ENCODE measurements at regions of chr1 and their contacts with region 1.

Region 1: DNA sequence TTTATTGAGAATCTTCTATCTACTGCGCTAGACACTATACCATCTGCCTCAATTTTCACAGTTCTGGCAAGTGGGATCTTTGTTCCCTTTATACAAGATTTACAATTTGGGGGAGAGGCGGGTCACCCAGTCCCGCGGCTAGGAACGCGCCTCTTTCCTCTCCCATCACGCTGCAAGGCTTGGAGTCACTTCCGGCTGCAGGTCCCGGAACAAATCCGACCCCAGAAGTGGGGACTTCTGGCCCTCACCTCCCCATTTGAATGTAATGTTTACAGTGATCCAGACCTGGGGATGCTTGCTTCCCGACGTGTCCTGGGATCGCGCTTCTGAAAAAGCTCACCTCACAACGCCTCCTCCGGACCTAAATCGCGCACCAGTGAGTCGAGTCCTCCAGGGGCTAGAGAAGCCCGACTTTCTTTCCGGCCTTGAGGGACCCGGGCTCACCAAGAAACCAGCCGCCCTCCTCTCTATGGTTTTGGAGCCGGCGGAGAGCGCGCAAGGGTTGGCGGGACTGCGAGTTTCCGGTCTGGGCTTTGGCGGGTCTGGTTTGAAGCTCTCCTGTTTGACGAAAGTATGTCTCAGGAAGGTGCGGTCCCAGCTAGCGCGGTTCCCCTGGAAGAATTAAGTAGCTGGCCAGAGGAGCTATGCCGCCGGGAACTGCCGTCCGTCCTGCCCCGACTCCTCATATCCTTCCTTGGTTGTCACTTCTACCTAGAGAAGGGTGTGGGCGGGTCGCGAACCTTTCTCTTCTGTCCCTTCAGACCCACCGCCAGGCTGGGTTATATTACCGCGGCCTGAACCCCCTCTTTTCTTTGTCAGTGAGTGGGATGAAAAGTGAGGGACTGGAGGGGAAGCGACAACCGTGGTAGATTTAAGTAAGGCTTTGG is at the start of gene METTL18:
- DNase-seq: peak; percentile 90
- H3K4me3 Mint-ChIP-seq: peak within 1 kb of the TSS; percentile 87
- H3K27ac Mint-ChIP-seq: peak within 1 kb of the TSS; percentile 86
- H3K4me1 Mint-ChIP-seq: peaks cover 55% of the 10 kb centered on the region
- H3K27me3 Mint-ChIP-seq: no peaks in the 10 kb centered on the region
- total RNA-seq, gene METTL18: 9.0 and 9.3 TPM in 2 replicates

Region 2: GRCh38 chr1:169595764-169596711 is 198.7 kb before region 1 on chr1:
- intact Hi-C with region 1: loop called (anchors 2 kb)
- DNase-seq: no peak
- H3K4me3 Mint-ChIP-seq: no peak overlapping the region
- H3K27ac Mint-ChIP-seq: no peak overlapping the region
- H3K4me1 Mint-ChIP-seq: peaks cover 59% of the 10 kb centered on the region
- H3K27me3 Mint-ChIP-seq: no peaks in the 10 kb centered on the region

Region 3: DNA sequence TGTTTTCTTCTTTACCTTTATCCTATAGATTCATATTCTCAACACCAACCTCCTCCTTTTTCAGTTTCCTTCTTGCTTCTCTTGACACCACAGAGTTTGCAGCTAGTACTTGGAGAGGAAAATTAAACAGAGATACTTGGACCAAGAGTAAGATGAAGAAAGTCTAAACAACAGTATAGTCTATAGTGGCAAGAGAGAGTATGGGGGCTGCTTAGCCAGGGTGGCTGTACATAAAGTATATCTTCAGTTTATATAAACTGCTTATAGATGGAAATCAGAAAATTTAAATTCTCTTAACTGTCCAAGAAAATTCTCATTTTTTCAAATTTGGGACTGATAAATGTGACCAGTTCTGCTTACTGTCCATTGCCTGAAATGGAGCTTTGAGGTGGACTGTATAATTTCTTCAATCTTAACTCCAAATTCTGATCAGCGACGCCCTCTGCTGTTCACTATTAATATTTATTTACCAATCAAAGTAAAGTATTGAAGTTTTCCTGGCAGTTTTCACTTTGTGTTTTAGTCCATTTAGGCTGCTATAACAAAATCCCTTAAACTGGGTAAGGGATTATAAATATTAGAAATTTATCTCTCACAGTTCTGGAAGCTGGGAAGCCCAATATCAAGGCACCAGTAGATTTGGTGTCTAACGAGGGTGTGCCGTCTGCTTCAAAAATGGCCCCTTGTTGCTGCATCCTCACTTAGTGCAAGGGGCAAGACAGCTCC is 14.8 kb after region 1 on chr1:
- intact Hi-C with region 1: loop called (anchors 1 kb)
- DNase-seq: no peak
- H3K4me3 Mint-ChIP-seq: no peak overlapping the region
- H3K27ac Mint-ChIP-seq: no peak overlapping the region
- H3K4me1 Mint-ChIP-seq: peaks cover 10% of the 10 kb centered on the region
- H3K27me3 Mint-ChIP-seq: no peaks in the 10 kb centered on the region

Region 4: DNA sequence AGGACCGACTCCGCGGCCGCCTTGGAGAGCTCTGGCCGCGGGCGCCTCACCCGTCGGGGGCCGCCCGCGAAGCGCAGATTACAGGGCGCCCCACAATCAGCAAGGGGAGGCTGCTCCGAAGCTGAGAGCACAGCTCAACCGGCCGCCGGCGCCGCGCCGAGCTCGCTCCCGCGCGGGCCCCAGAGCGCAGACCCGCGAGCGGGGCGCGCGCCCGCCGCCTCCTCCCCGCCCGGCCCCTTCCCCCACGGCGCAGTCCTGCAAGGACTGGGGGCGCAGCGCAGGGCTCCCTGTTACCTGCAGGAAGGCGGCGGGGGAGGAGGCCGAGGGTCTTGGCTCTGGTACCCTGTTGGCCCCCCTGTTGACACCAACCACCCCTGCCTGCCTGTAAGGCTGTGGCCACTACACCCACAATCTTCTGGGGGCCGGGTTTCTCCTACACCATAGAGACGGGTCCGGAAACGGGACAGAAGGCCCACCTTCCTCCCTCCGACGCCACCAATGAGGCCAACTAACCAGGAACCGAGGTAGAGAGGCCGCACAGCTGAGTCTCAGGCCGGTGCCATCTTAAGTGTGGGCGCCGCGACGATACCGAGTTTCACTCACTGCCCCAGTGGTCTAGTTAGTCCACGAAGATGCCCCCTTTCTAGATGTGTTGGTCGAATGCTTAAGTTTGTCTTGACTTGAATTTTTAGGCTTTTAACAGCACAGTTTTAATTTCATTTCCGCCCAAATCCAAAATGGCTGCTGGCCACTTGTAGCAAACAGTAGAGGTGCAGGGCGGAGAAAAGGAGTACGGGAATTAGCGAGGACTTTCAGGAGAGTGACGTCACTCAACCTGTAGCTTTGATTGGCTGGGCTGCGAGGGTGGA is 99.0 kb after region 1 on chr1 and contains the start of gene SCYL3:
- intact Hi-C with region 1: loop called (anchors 1 kb)
- DNase-seq: peak; percentile 86
- H3K4me3 Mint-ChIP-seq: peak within 1 kb of the TSS; percentile 86
- H3K27ac Mint-ChIP-seq: peak within 1 kb of the TSS; percentile 100
- H3K4me1 Mint-ChIP-seq: peaks cover 51% of the 10 kb centered on the region
- H3K27me3 Mint-ChIP-seq: peaks cover 12% of the 10 kb centered on the region
- total RNA-seq, gene SCYL3: 11.8 and 12.3 TPM in 2 replicates

Region 5: DNA sequence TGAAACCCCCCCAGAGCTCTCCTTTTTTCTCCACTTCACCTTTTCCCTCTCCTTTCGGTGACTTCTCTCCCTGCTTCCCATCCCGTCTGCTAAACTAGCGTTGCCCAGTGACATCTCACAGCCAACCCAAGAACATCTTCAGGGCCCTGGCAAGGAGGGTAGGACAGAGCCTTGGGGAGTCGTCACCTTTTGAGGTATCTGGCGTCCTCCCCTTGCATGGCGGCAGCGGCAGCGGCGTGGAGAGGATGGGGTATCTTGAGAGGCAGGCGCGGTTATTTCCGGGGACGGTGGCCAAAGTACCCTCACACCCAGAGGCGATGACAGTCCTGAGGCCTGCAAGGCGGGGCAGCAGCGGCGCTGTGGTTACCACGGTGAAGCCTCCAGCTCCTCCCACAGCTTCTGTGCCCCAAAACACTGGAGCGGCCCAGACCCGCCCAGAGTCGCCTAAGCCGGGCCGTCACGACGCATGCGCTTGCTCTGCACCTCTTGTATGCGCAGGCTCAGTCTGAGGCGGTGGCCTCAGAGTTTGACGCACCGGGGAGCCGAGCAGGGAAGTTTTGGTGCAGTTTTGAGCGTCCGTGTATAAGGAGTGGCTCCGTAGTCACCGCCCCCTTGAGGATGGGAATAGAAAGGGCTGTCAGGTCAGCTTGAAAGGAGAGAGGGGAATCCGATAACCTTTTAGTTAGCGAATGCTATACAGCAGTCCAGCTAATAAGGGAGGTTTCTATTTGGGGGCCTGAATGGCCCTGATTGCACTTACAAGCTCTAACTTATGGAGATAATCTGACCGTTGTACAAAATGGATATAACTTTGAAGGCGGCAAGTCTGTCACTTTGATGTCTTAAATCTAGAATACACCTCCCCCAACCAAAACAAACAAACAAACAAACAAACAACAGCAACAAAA is 279.7 kb after region 1 on chr1 and contains the start of gene KIFAP3:
- intact Hi-C with region 1: loop called (anchors 5 kb)
- DNase-seq: peak; percentile 95
- H3K4me3 Mint-ChIP-seq: peak within 1 kb of the TSS; percentile 95
- H3K27ac Mint-ChIP-seq: peak within 1 kb of the TSS; percentile 96
- H3K4me1 Mint-ChIP-seq: peaks cover 45% of the 10 kb centered on the region
- H3K27me3 Mint-ChIP-seq: no peaks in the 10 kb centered on the region
- total RNA-seq, gene KIFAP3: 12.9 and 13.5 TPM in 2 replicates

Region 6: DNA sequence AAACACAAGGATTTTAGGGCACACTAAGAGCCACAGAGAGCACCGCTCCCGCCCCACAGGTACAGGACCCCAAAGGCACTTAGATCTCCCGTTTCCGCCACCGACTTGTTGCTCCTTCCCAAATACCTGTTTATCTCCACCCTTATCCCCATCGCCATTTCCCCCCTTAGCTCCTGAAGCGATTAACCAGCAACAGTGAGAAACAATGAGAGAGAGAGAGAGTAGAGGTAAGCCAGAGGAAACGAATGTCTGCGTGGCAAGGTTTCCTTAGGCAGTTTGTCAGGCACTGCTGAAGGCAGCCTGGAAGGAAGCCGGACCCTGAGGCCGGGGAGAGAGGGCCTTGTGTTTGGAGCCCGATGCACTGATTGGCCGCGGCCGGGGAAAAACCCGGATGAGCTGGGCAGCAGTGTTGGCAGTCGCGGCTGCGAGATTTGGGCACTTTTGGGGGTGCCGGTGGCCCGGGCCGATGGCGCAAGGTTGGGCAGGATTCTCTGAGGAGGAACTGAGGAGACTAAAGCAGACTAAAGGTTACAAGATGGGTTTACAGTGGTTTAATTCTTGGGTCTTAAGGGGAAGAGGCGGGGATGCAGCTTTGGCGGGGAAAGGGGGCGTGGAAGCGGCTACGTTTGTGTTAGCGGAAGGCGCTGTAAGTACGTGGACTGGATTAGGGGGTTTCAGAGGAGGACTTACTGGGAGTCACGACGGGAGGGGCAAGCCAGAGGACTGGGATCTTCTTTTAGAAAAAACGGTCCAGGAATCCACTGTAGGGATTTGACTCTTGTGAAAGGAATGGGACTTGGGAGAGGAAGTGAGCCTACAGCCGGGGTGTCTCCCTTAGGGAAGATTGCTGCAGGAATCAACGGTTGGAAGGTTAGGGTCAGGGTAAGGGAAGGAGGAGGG is 737.2 kb after region 1 on chr1 and contains the start of gene GORAB:
- intact Hi-C with region 1: loop called (anchors 2 kb)
- DNase-seq: peak; percentile 82
- H3K4me3 Mint-ChIP-seq: no peak within 1 kb of the TSS
- H3K27ac Mint-ChIP-seq: no peak within 1 kb of the TSS
- H3K4me1 Mint-ChIP-seq: peaks cover 8% of the 10 kb centered on the region
- H3K27me3 Mint-ChIP-seq: peaks cover 4% of the 10 kb centered on the region
- total RNA-seq, gene GORAB: 11.8 and 12.2 TPM in 2 replicates